ENCODE measurements at regions of chr12 and their contacts with region 1.

Region 1: GRCh38 chr12:94262228-94263010 is 114.0 kb downstream of the PLXNC1 start:
- DNase-seq: peak; percentile 52
- H3K4me3 Mint-ChIP-seq: peak overlapping the region; percentile 80
- H3K27ac Mint-ChIP-seq: peak overlapping the region; percentile 91
- H3K4me1 Mint-ChIP-seq: peaks cover 31% of the 10 kb centered on the region
- H3K27me3 Mint-ChIP-seq: no peaks in the 10 kb centered on the region

Region 2: DNA sequence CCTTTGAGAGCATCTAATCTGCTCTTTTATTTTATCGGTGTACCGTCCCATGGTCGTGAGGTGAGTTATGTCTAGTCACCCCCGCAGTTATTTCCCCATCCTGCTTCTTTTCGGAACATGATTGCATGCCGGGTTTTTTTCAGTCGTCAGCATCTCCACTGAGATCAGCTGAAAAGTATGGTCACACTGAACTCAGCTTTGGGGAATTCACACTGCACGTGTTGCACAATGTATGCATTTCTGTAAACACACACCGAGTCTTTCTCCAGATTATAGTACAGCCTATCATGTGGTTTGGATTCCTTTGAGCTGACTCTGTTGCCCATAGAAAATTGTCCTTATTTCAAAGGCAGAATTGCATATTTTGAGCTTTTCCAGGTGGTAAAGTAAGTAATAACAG is 89.4 kb before region 1 on chr12:
- intact Hi-C with region 1: loop called (anchors 1 kb)
- DNase-seq: no peak
- H3K4me3 Mint-ChIP-seq: no peak overlapping the region
- H3K27ac Mint-ChIP-seq: no peak overlapping the region
- H3K4me1 Mint-ChIP-seq: peaks cover 58% of the 10 kb centered on the region
- H3K27me3 Mint-ChIP-seq: no peaks in the 10 kb centered on the region

Region 3: GRCh38 chr12:94202245-94203180 is 59.9 kb before region 1 on chr12:
- intact Hi-C with region 1: no loop called
- DNase-seq: no peak
- H3K4me3 Mint-ChIP-seq: no peak overlapping the region
- H3K27ac Mint-ChIP-seq: peak overlapping the region; percentile 6
- H3K4me1 Mint-ChIP-seq: peaks cover 52% of the 10 kb centered on the region
- H3K27me3 Mint-ChIP-seq: no peaks in the 10 kb centered on the region

Region 4: GRCh38 chr12:94326727-94327126 is 64.3 kb after region 1 on chr12:
- intact Hi-C with region 1: loop called (anchors 1 kb)
- DNase-seq: no peak
- H3K4me3 Mint-ChIP-seq: no peak overlapping the region
- H3K27ac Mint-ChIP-seq: peak overlapping the region; percentile 44
- H3K4me1 Mint-ChIP-seq: peaks cover 35% of the 10 kb centered on the region
- H3K27me3 Mint-ChIP-seq: no peaks in the 10 kb centered on the region

Region 5: DNA sequence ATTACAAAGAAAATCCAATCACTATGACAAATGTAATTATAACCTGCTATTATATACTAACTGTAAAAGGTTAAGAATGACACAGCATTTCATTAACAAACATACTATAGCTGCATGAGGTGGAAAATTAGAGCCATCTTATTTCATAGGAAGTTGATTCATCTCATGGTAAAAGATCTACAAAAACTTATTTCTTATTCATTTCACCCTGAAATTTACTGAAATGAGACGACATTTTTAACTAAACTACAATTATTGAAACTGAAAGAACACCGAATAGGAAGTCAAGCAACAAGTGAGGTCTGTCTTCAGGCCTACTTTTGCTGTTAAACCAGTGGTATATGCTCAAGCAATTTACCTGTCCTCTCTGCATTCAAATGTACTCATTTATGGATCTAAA is 110.0 kb after region 1 on chr12:
- intact Hi-C with region 1: loop called (anchors 2 kb)
- DNase-seq: no peak
- H3K4me3 Mint-ChIP-seq: peak overlapping the region; percentile 13
- H3K27ac Mint-ChIP-seq: peak overlapping the region; percentile 74
- H3K4me1 Mint-ChIP-seq: peaks cover 41% of the 10 kb centered on the region
- H3K27me3 Mint-ChIP-seq: no peaks in the 10 kb centered on the region

Region 6: GRCh38 chr12:94459728-94460615 is 197.6 kb after region 1 on chr12 and contains the start of gene CEP83:
- intact Hi-C with region 1: loop called (anchors 2 kb)
- DNase-seq: peak; percentile 95
- H3K4me3 Mint-ChIP-seq: peak within 1 kb of the TSS; percentile 88
- H3K27ac Mint-ChIP-seq: peak within 1 kb of the TSS; percentile 92
- H3K4me1 Mint-ChIP-seq: peaks cover 27% of the 10 kb centered on the region
- H3K27me3 Mint-ChIP-seq: peaks cover 5% of the 10 kb centered on the region
- total RNA-seq, gene CEP83: 32.4 and 35.9 TPM in 2 replicates

Measured in activated T-helper 2 cell treated with anti-CD3 and anti-CD28 coated beads, Interferon-gamma antibody, Interleukin-2, Interleukin-4, amounts not matched to agents 10 μg/mL and 5 μg/mL and 100 μg/mL, durations not matched to agents 14 hours and 24 hours and 36 hours (primary cell).